ENCODE measurements at regions of chr20 and their contacts with region 1.

Region 1: DNA sequence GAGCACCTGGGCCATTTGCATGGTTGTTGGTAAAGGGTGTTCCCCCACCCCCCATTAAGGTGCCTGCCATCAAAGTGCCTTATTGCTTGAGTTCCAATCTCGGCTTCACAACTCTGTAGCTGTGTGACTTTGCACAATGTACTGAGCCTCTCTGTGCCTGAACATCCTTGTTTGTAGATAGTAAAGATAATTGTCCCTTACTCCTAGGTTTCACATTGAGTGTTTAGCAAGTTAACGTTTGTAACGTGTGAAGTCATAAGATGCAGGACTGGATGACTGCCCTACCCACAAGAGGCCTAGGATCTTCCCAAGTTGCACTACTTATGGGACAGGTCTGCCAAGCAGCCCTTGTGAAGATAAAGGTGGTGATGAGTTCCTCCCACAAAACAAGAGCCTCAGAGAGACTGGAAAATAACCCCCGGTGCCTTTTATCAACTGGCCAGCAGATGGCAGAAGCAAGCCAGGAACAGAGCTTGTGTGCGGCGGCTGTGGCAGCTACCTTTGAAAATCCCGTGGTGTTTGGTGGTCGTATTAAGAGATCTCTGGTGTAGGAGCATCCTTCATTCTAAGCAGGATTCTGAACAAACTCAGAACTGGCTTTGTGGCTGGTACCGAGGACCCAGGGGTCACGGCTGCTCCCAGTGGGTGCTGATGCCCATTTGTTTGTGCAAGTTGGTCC is 99.0 kb downstream of the CDH26 start:
- DNase-seq: peak in 1 of 2 donors; percentile 63
- ATAC-seq: peak; percentile 28 to 29
- H3K4me3 ChIP-seq: peak overlapping the region in 2 of 4 donors; percentile 22 to 32
- H3K27ac ChIP-seq: peak overlapping the region; percentile 75 to 93 (median 88)
- H3K4me1 ChIP-seq: peaks cover 46 to 54% of the 10 kb centered on the region in 2 donors
- H3K27me3 ChIP-seq: no peaks in the 10 kb centered on the region
- CTCF ChIP-seq: peak; percentile 78 to 92 (median 80)
- POLR2A ChIP-seq: no peak

Region 2: GRCh38 chr20:59940174-59940971 is 116.9 kb before region 1 on chr20 and contains the starts of genes FAM217B and PPP1R3D:
- in situ Hi-C with region 1: loop called in 1 of 4 experiments (anchors 10 kb)
- intact Hi-C with region 1: loop called (anchors 2 kb)
- DNase-seq: peak; percentile 97 to 98
- ATAC-seq: peak; percentile 74 to 77
- H3K4me3 ChIP-seq: peak within 1 kb of the TSS; percentile 62 to 90 (median 74)
- H3K27ac ChIP-seq: peak within 1 kb of the TSS; percentile 91 to 99 (median 93)
- H3K4me1 ChIP-seq: peaks cover 58 to 65% of the 10 kb centered on the region in 2 donors
- H3K27me3 ChIP-seq: no peaks in the 10 kb centered on the region
- CTCF ChIP-seq: peak in 1 of 5 experiments; percentile 6
- POLR2A ChIP-seq: peak; percentile 82 to 90
- total RNA-seq, gene FAM217B: 2.8 to 6.9 (median 6.4) TPM
- total RNA-seq, gene PPP1R3D: 4.1 to 12.0 (median 10.8) TPM

Region 3: GRCh38 chr20:60095456-60095855 is 38.2 kb after region 1 on chr20:
- in situ Hi-C with region 1: no loop called
- intact Hi-C with region 1: no loop called
- DNase-seq: no peak
- ATAC-seq: no peak
- H3K4me3 ChIP-seq: no peak overlapping the region
- H3K27ac ChIP-seq: no peak overlapping the region
- H3K4me1 ChIP-seq: no peaks in the 10 kb centered on the region
- H3K27me3 ChIP-seq: no peaks in the 10 kb centered on the region
- CTCF ChIP-seq: no peak
- POLR2A ChIP-seq: no peak

Region 4: GRCh38 chr20:60137629-60138245 is 80.5 kb after region 1 on chr20:
- in situ Hi-C with region 1: no loop called
- intact Hi-C with region 1: loop called (anchors 5 kb)
- DNase-seq: peak in 1 of 2 donors; percentile 44
- ATAC-seq: peak; percentile 50 to 81
- H3K4me3 ChIP-seq: peak overlapping the region; percentile 38 to 47 (median 44)
- H3K27ac ChIP-seq: peak overlapping the region; percentile 30 to 75 (median 74)
- H3K4me1 ChIP-seq: peaks cover 5 to 6% of the 10 kb centered on the region in 2 donors
- H3K27me3 ChIP-seq: no peaks in the 10 kb centered on the region
- CTCF ChIP-seq: peak in 4 of 5 experiments; percentile 10 to 63 (median 36)
- POLR2A ChIP-seq: no peak

Region 5: GRCh38 chr20:61120595-61121515 is 1063.6 kb after region 1 on chr20:
- in situ Hi-C with region 1: loop called in 1 of 4 experiments (anchors 25 kb)
- intact Hi-C with region 1: no loop called
- DNase-seq: peak; percentile 14 to 41
- ATAC-seq: peak; percentile 53 to 68
- H3K4me3 ChIP-seq: no peak overlapping the region
- H3K27ac ChIP-seq: no peak overlapping the region
- H3K4me1 ChIP-seq: no peaks in the 10 kb centered on the region
- H3K27me3 ChIP-seq: peaks cover 0 to 4% (median 2%) of the 10 kb centered on the region in 3 donors
- CTCF ChIP-seq: peak in 2 of 5 experiments; percentile 28 to 43
- POLR2A ChIP-seq: no peak

Region 6: DNA sequence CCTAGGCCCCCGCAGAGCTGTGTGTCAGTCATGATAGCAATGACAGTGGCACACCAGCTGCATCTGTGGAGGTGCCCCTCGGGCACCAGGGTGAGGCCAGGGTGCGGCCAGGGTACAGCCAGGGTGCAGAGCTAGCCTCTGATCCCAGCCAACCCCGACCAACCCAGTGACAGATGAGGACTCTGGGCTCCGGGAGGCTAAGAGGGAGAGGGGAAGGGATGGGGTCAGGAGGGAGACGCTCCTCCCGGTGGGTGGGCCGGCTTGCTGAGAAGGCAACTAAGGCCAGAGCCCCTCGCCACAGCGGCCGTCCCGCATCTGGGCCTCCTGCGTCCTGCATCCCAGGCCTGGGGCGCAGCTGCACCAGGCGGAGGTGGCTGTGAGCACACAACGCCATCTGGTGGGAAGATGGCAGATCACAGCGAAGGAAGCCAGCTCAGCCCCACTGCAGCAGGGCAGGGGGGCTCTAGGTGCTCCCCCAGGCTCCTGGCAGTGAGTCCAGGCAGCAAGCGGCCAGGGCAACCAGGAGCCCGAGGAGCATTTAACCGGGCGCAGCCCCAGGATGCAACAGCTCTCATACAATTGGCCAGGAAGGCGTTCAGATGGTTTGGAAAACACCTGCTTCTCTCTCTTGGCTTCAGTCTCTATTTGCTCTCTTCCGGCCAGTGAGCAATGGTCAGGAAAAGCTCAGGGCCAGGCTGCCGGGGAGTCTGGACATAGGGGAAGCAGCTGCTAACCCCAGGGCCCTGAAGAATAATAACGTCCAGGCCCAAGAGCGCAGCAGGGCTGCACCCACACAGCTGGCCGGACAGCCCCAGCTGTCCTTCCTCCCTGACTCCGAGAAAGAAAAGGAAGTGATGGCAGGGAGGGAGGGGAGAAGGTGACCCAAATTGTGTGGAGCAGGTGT is 1839.0 kb after region 1 on chr20:
- in situ Hi-C with region 1: no loop called
- intact Hi-C with region 1: loop called (anchors 5 kb)
- DNase-seq: no peak
- ATAC-seq: no peak
- H3K4me3 ChIP-seq: no peak overlapping the region
- H3K27ac ChIP-seq: no peak overlapping the region
- H3K4me1 ChIP-seq: no peaks in the 10 kb centered on the region
- H3K27me3 ChIP-seq: peaks cover 0 to 12% (median 12%) of the 10 kb centered on the region in 3 donors
- CTCF ChIP-seq: peak in 4 of 5 experiments; percentile 11 to 65 (median 49)
- POLR2A ChIP-seq: no peak